ENCODE measurements at regions of chr11 and their contacts with region 1.

Region 1: GRCh38 chr11:64971421-64972233 is at the start of gene MAJIN:
- DNase-seq: peak; percentile 18
- ATAC-seq: peak; percentile 79
- H3K4me3 ChIP-seq: peak within 1 kb of the TSS; percentile 27 to 53
- H3K27ac ChIP-seq: peak within 1 kb of the TSS; percentile 52
- H3K4me1 ChIP-seq: no peaks in the 10 kb centered on the region
- H3K27me3 ChIP-seq: no peaks in the 10 kb centered on the region
- CTCF ChIP-seq: no peak
- total RNA-seq, gene MAJIN: not detected

Region 2: DNA sequence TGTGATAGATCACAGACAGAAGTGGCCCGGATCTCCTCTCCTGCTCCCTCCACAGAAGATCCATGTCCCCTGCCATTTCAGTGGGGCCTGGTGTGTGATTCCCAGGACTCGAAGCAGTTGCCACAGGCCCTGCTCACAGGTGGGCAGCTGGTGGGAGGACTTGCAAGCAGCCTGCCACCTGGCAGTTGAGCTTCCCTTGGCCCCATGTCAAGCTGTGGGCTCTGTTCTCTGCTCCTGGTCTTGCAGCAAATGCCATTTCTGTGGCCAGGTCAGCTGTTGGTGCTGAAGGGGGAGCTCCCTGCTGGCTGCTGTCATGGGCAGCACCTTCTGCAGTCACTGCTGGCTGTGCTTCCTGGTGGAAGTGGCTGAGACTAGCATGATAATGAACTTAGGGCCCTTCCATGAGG is 439.7 kb before region 1 on chr11:
- CTCF ChIA-PET with region 1: no interaction called
- POLR2A ChIA-PET with region 1: no interaction called
- in situ Hi-C with region 1: no loop called
- intact Hi-C with region 1: no loop called
- DNase-seq: no peak
- ATAC-seq: peak; percentile 43
- H3K4me3 ChIP-seq: no peak overlapping the region
- H3K27ac ChIP-seq: no peak overlapping the region
- H3K4me1 ChIP-seq: no peaks in the 10 kb centered on the region
- H3K27me3 ChIP-seq: peaks cover 12% of the 10 kb centered on the region
- CTCF ChIP-seq: no peak

Region 3: GRCh38 chr11:64796801-64797550 is 174.7 kb before region 1 on chr11:
- CTCF ChIA-PET with region 1: no interaction called
- POLR2A ChIA-PET with region 1: interaction called, 10 read pairs
- in situ Hi-C with region 1: no loop called
- intact Hi-C with region 1: no loop called
- DNase-seq: no peak
- ATAC-seq: no peak
- H3K4me3 ChIP-seq: no peak overlapping the region
- H3K27ac ChIP-seq: no peak overlapping the region
- H3K4me1 ChIP-seq: 0 out of 2 replicates have a peak, but pooled peaks cover 4% of the 10 kb centered on the region
- H3K27me3 ChIP-seq: no peaks in the 10 kb centered on the region
- CTCF ChIP-seq: no peak

Region 4: DNA sequence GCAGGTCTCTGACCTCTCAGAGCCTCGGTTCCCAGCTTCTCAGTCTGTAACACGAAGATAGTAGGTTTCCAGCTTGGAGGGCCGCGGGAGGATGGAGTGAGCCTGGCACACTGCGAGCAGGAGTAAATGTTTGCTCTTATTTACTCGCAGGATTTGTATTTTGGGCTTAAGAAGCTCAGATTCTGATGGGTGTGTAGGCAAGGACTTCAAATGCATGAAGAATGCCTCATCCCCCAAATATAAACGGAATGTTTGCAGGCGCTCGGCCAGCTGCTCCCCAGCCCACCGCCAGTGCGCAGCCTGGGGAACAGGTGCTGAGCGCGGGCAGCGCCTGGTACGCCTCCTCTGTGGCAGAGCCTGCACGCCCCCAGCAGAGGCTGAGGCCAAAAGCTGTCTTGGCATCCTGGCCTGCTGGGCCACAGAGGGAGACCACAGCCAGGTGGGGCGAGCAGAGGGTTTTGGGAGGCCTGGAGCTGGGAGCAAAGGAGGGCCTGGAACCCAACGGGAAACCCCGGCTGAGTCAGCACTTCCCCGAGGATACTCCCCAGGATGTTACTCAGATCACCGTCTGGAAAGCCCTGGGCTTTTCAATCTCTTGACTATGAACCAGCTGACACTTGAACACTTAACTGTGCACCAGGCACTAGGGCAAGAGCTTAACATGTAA is 102.6 kb before region 1 on chr11:
- CTCF ChIA-PET with region 1: interaction called, 12 read pairs
- POLR2A ChIA-PET with region 1: no interaction called
- in situ Hi-C with region 1: no loop called
- intact Hi-C with region 1: no loop called
- DNase-seq: no peak
- ATAC-seq: peak; percentile 70
- H3K4me3 ChIP-seq: peak overlapping the region in 1 of 2 experiments; percentile 12; a peak in 2 of 4 replicates
- H3K27ac ChIP-seq: peak overlapping the region; percentile 83
- H3K4me1 ChIP-seq: peaks cover 84% of the 10 kb centered on the region
- H3K27me3 ChIP-seq: no peaks in the 10 kb centered on the region
- CTCF ChIP-seq: no peak

Region 5: GRCh38 chr11:64989416-64989815 is 17.8 kb after region 1 on chr11:
- CTCF ChIA-PET with region 1: interaction called, 11 read pairs
- POLR2A ChIA-PET with region 1: no interaction called
- in situ Hi-C with region 1: no loop called
- intact Hi-C with region 1: no loop called
- DNase-seq: no peak
- ATAC-seq: no peak
- H3K4me3 ChIP-seq: no peak overlapping the region
- H3K27ac ChIP-seq: no peak overlapping the region
- H3K4me1 ChIP-seq: no peaks in the 10 kb centered on the region
- H3K27me3 ChIP-seq: no peaks in the 10 kb centered on the region
- CTCF ChIP-seq: no peak

Region 6: DNA sequence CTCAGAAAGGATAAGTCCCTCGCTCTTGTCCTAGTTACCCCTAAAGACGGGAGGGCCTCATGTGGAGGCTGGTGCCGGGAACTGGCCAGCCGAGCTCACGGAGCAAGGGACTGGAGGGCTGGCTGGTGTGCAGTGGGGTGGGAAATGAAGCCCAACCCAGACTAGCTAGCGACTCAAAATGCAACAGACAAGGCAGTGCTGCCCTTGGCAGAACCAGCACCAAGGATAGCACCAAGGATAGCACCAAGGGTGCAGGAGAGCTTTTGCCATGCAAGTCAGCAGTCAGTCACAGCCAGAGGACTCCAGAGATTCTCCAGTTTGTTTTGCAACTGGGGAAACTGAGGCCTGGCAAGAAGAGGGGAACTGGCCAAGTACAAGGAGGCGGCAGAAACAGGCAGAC is 31.7 kb after region 1 on chr11:
- CTCF ChIA-PET with region 1: no interaction called
- POLR2A ChIA-PET with region 1: no interaction called
- in situ Hi-C with region 1: no loop called
- intact Hi-C with region 1: no loop called
- DNase-seq: no peak
- ATAC-seq: no peak
- H3K4me3 ChIP-seq: no peak overlapping the region
- H3K27ac ChIP-seq: no peak overlapping the region
- H3K4me1 ChIP-seq: no peaks in the 10 kb centered on the region
- H3K27me3 ChIP-seq: no peaks in the 10 kb centered on the region
- CTCF ChIP-seq: no peak

Measured in Panc1 (cell line).